ENCODE measurements at regions of chr19 and their contacts with region 1.

Region 1: GRCh38 chr19:42881229-42881628 is 1.7 kb upstream of the PSG1 start:
- DNase-seq: no peak
- ATAC-seq: no peak
- H3K4me3 ChIP-seq: no peak overlapping the region
- H3K27ac ChIP-seq: no peak overlapping the region
- H3K4me1 ChIP-seq: no peaks in the 10 kb centered on the region
- H3K27me3 ChIP-seq: peaks cover 0 to 28% (median 0%) of the 10 kb centered on the region in 9 donors
- CTCF ChIP-seq: peak in 6 of 12 donors; percentile 8 to 29 (median 16)
- POLR2A ChIP-seq: no peak

Region 2: DNA sequence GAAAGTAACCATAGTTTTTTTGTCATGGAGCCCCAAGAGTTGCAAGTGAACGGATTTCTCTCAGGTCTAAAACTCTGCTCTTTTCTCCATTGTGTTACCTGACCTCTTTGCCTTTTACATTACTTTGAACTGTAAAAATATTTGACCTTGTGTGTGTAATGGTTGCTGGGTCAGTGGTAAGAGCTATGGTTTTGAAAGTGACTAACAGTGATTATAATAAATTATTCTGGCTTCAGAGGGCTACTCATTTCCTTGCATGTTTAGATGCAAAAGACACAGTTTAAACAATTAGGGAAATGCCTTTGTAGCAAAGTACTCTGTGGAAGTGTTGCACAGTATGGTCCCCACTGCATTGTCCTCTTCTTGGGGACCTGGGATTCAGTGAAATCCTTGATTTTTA is 86.5 kb before region 1 on chr19:
- intact Hi-C with region 1: loop called in 2 of 10 experiments (anchors 10 kb)
- DNase-seq: no peak
- ATAC-seq: no peak
- H3K4me3 ChIP-seq: no peak overlapping the region
- H3K27ac ChIP-seq: no peak overlapping the region
- H3K4me1 ChIP-seq: no peaks in the 10 kb centered on the region
- H3K27me3 ChIP-seq: no peaks in the 10 kb centered on the region
- CTCF ChIP-seq: no peak
- POLR2A ChIP-seq: no peak

Measured in heart left ventricle (tissue), 16 donors.